ENCODE measurements at regions of chr9 and their contacts with region 1.

Region 1: DNA sequence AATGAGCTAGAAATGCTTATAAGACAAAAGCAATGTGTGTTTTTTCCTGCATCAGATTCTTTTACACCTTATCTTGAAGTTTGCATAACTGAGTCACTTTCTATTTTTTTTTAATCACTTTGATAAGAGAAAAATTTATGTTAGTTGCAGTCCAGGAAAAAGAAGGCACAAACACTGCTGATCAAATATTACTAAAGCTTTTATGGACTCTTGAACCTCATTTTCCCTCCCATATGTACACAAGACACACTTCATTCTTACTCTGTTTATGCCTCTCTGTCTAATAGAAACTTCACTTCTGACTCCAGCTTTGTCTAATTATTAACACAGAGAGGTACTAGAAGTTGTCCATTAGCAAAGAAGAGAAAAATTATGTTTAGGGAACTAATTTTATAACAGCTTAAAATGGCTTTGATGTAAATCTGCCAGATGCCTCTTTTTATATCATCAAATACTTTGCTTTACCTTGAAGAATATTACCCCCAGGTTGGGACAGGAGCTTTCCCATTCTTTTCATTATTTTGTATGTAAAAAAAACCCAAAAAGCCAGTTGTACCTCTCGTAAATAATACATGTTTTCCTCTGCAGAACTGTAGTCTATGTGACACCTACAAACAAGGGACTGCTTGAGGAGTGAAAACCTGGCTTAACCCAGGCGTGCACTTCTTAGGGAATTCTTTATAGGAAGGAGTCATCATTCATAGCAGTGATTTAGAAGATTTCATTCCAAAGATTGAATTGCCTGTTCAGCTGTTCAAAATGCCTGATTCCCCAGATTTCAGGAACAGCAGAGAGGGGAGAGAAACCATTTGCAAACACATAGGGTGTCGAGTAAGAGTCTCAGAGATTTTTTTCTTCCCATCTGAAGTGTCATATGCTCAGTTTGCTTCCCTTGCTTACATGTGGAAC is 72.6 kb downstream of the DAPK1 start:
- DNase-seq: no peak
- ATAC-seq: no peak
- H3K4me3 Mint-ChIP-seq: no peak overlapping the region
- H3K27ac Mint-ChIP-seq: no peak overlapping the region
- H3K4me1 Mint-ChIP-seq: no peaks in the 10 kb centered on the region
- H3K27me3 Mint-ChIP-seq: no peaks in the 10 kb centered on the region
- CTCF ChIP-seq: no peak

Region 2: DNA sequence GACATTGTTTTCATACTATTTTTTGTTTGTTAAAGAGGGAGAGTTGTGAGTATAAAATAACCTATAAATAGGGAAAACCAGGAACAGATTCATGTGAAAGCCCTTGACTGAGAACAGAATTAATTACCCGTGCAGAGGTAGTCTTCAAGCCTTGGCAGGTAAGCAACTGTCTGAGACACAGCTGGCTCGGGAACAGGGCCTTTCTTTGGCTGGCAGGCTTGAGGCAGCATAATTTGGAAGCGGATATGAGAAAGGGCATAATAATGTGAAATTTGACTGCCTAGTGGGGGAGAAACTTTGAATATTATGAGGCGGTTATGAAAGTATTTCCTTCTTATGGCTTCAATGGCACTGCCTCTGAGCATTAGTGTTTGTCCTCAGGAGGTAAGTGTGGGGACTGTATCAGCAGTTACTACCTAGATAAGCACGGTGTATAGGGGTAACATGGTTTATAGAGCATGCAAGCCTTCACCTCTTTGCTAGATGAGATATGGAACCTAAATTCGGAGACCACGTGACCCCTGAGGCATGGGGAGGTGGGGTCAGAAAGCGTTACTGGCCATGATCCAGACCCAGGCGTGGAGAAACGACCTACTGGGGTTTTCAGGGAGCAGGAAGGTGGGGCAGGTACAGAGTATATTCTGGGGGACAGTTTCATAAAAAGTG is 412.8 kb before region 1 on chr9:
- CTCF ChIA-PET with region 1: no interaction called
- POLR2A ChIA-PET with region 1: no interaction called
- intact Hi-C with region 1: no loop called
- DNase-seq: no peak
- ATAC-seq: no peak
- H3K4me3 Mint-ChIP-seq: no peak overlapping the region
- H3K27ac Mint-ChIP-seq: no peak overlapping the region
- H3K4me1 Mint-ChIP-seq: no peaks in the 10 kb centered on the region
- H3K27me3 Mint-ChIP-seq: no peaks in the 10 kb centered on the region
- CTCF ChIP-seq: no peak

Region 3: DNA sequence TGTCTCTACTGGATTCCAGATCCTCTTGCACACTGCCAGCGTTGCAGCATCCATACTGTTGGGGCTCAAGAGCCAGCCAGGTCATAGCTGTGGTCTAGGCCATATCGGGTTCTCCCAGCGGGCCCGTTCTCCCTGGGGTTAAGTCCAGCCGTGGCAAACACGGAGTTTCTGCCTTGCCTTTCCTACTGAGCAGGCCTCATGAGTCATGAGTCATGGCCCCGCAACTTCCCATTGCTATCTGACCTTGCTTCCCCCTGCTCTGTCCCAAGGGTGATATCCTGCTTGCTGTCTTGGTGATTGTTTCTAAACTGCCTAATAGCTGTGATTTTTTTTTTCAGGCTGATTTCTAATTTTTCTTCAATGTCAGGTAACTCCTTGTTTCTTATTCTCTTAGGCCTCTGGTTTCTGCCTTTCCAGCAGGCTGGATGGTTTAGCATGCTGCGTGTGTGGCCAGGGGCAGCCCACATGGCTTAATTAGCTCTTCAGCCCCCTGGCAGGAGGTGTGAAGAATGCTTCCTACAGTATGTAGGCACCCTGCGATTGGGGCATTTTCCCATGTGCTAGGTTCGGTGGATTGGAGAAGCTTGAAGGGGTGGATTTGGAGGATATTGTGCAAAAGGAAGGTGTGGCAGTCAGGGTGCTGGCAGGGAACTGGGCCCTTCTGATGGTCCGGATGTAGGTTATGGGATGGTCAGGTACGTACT is 53.9 kb before region 1 on chr9:
- CTCF ChIA-PET with region 1: no interaction called
- POLR2A ChIA-PET with region 1: no interaction called
- intact Hi-C with region 1: loop called (anchors 10 kb)
- DNase-seq: no peak
- ATAC-seq: no peak
- H3K4me3 Mint-ChIP-seq: no peak overlapping the region
- H3K27ac Mint-ChIP-seq: no peak overlapping the region
- H3K4me1 Mint-ChIP-seq: peaks cover 20% of the 10 kb centered on the region
- H3K27me3 Mint-ChIP-seq: peaks cover 23% of the 10 kb centered on the region
- CTCF ChIP-seq: no peak

Region 4: GRCh38 chr9:88056876-88057275 is 486.6 kb after region 1 on chr9:
- CTCF ChIA-PET with region 1: no interaction called
- POLR2A ChIA-PET with region 1: no interaction called
- intact Hi-C with region 1: no loop called
- DNase-seq: no peak
- ATAC-seq: no peak
- H3K4me3 Mint-ChIP-seq: no peak overlapping the region
- H3K27ac Mint-ChIP-seq: no peak overlapping the region
- H3K4me1 Mint-ChIP-seq: no peaks in the 10 kb centered on the region
- H3K27me3 Mint-ChIP-seq: no peaks in the 10 kb centered on the region
- CTCF ChIP-seq: no peak

Region 5: GRCh38 chr9:88691811-88692210 is 1121.6 kb after region 1 on chr9:
- CTCF ChIA-PET with region 1: no interaction called
- POLR2A ChIA-PET with region 1: no interaction called
- intact Hi-C with region 1: no loop called
- DNase-seq: no peak
- ATAC-seq: no peak
- H3K4me3 Mint-ChIP-seq: no peak overlapping the region
- H3K27ac Mint-ChIP-seq: no peak overlapping the region
- H3K4me1 Mint-ChIP-seq: no peaks in the 10 kb centered on the region
- H3K27me3 Mint-ChIP-seq: peaks cover 4% of the 10 kb centered on the region
- CTCF ChIP-seq: no peak